Gastrocnemius medialis (tissue), 4 donors: ENCODE measurements at regions of chrX and their contacts with region 1.

Region 1: GRCh38 chrX:23907498-23908218 is at the starts of genes APOO and CXorf58:
- DNase-seq: peak; percentile 76 to 89
- ATAC-seq: peak; percentile 92 to 97
- H3K4me3 ChIP-seq: peak within 1 kb of the TSS; percentile 49 to 76 (median 68)
- H3K27ac ChIP-seq: peak within 1 kb of the TSS; percentile 87 to 95 (median 92)
- H3K4me1 ChIP-seq: peaks cover 3 to 8% of the 10 kb centered on the region in 2 donors
- H3K27me3 ChIP-seq: no peaks in the 10 kb centered on the region
- CTCF ChIP-seq: peak; percentile 74 to 84 (median 77)
- POLR2A ChIP-seq: peak; percentile 21 to 28
- total RNA-seq, gene APOO: 12.1 to 37.3 (median 30.8) TPM
- total RNA-seq, gene CXorf58: 3.1 TPM in 1 of 4 donors, not detected in the others

Region 2: DNA sequence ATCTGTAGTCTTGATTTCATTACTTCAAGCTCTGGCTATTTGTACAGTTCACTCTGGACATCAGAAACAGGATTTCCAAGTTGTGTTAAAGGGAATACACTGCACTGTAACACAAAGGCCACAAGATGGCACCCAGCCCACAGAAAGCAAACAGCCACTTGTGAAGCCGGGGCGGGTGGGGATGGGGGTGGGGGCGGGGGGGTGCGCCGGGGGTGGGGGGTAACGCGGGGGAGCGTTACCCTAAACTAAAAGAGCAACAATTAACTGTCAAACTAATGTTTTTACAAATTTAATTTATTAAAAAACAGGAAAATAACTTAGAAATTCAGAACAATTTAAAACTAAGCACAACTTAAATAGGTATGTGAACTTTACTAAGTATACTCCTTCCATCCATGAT is 213.1 kb before region 1 on chrX:
- in situ Hi-C with region 1: loop called in 3 of 4 experiments (anchors 5 to 25 kb)
- intact Hi-C with region 1: loop called (anchors 2 kb)
- DNase-seq: peak; percentile 12 to 35
- ATAC-seq: peak; percentile 49 to 50
- H3K4me3 ChIP-seq: no peak overlapping the region
- H3K27ac ChIP-seq: no peak overlapping the region
- H3K4me1 ChIP-seq: no peaks in the 10 kb centered on the region
- H3K27me3 ChIP-seq: no peaks in the 10 kb centered on the region
- CTCF ChIP-seq: peak in 2 of 5 experiments; percentile 47 to 49
- POLR2A ChIP-seq: no peak

Region 3: GRCh38 chrX:23782863-23783568 is 124.6 kb before region 1 on chrX and contains the start of gene SAT1:
- in situ Hi-C with region 1: loop called (anchors 5 to 10 kb)
- intact Hi-C with region 1: loop called (anchors 1 kb)
- DNase-seq: peak; percentile 91 to 94
- ATAC-seq: peak; percentile 87 to 90
- H3K4me3 ChIP-seq: peak within 1 kb of the TSS; percentile 65 to 85 (median 70)
- H3K27ac ChIP-seq: peak within 1 kb of the TSS; percentile 94 to 96 (median 94)
- H3K4me1 ChIP-seq: peaks cover 0 to 16% of the 10 kb centered on the region in 2 donors
- H3K27me3 ChIP-seq: no peaks in the 10 kb centered on the region
- CTCF ChIP-seq: peak; percentile 69 to 85 (median 83)
- POLR2A ChIP-seq: peak; percentile 92 to 96
- total RNA-seq, gene SAT1: 46.1 to 122 (median 81.4) TPM

Region 4: GRCh38 chrX:24034485-24034884 is 126.8 kb after region 1 on chrX:
- in situ Hi-C with region 1: loop called in 1 of 4 experiments (anchors 10 kb)
- intact Hi-C with region 1: no loop called
- DNase-seq: no peak
- ATAC-seq: no peak
- H3K4me3 ChIP-seq: no peak overlapping the region
- H3K27ac ChIP-seq: no peak overlapping the region
- H3K4me1 ChIP-seq: no peaks in the 10 kb centered on the region
- H3K27me3 ChIP-seq: no peaks in the 10 kb centered on the region
- CTCF ChIP-seq: no peak
- POLR2A ChIP-seq: no peak

Region 5: GRCh38 chrX:24150051-24150790 is 242.6 kb after region 1 on chrX:
- in situ Hi-C with region 1: no loop called
- intact Hi-C with region 1: loop called (anchors 5 kb)
- DNase-seq: peak; percentile 80 to 83
- ATAC-seq: peak; percentile 79 to 85
- H3K4me3 ChIP-seq: peak overlapping the region; percentile 62 to 85 (median 76)
- H3K27ac ChIP-seq: peak overlapping the region; percentile 93 to 99 (median 95)
- H3K4me1 ChIP-seq: peaks cover 57 to 64% of the 10 kb centered on the region in 2 donors
- H3K27me3 ChIP-seq: no peaks in the 10 kb centered on the region
- CTCF ChIP-seq: peak in 4 of 5 experiments; percentile 59 to 68 (median 61)
- POLR2A ChIP-seq: peak; percentile 51 to 63